Tibial artery (tissue), 4 donors: ENCODE measurements at regions of chr15 and their contacts with region 1.

Region 1: GRCh38 chr15:97129674-97130073 is 799.2 kb downstream of the NR2F2 start:
- DNase-seq: no peak
- H3K4me3 ChIP-seq: no peak overlapping the region
- H3K27ac ChIP-seq: no peak overlapping the region
- H3K4me1 ChIP-seq: no peaks in the 10 kb centered on the region
- H3K27me3 ChIP-seq: no peaks in the 10 kb centered on the region
- CTCF ChIP-seq: no peak

Region 2: DNA sequence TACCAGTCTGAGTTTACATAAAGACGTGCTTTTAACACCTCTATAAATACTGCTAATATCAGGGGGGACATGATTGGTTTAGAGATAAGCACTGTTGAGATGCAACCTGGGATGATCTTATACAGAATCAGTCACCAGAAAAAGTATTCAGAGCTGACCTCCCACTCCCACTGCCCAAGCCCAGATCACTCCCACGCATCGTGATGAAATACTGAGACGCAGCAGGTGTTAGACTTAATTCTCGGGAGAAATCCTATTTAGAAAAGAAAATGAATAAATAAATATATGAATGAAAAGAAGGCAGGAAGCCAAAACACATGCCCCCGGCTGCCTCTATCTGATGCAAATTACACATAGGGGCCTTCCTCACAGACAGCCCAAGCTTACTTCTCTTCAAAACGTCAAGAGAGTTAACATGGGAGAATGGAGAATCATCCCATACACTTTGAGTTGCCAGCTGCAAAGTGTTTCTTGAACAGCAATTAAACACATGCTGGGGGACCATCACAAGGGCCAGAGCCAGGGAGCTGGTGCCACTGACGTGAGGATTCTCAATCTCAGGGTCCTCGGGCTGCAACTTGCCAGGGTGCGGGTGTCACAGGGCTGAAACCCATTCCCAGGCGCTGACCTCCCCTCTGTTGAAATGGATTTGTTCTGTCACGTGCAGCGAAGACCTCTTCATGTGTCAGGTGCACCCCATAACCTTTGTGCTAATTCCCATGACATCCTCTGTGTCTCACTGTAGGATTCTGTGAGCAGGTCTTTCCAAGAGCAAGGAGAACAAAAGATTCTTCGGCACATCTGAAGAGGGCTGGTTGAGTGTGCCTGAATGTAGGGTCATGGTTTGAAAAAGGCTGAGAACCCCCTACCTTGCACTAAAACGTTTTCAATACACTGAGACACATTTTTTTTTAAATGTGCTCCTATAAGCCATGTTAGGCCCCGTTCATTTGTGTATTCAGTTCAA is 66.7 kb after region 1 on chr15:
- intact Hi-C with region 1: loop called (anchors 10 kb)
- DNase-seq: no peak
- H3K4me3 ChIP-seq: no peak overlapping the region
- H3K27ac ChIP-seq: no peak overlapping the region
- H3K4me1 ChIP-seq: no peaks in the 10 kb centered on the region
- H3K27me3 ChIP-seq: no peaks in the 10 kb centered on the region
- CTCF ChIP-seq: no peak

Region 3: DNA sequence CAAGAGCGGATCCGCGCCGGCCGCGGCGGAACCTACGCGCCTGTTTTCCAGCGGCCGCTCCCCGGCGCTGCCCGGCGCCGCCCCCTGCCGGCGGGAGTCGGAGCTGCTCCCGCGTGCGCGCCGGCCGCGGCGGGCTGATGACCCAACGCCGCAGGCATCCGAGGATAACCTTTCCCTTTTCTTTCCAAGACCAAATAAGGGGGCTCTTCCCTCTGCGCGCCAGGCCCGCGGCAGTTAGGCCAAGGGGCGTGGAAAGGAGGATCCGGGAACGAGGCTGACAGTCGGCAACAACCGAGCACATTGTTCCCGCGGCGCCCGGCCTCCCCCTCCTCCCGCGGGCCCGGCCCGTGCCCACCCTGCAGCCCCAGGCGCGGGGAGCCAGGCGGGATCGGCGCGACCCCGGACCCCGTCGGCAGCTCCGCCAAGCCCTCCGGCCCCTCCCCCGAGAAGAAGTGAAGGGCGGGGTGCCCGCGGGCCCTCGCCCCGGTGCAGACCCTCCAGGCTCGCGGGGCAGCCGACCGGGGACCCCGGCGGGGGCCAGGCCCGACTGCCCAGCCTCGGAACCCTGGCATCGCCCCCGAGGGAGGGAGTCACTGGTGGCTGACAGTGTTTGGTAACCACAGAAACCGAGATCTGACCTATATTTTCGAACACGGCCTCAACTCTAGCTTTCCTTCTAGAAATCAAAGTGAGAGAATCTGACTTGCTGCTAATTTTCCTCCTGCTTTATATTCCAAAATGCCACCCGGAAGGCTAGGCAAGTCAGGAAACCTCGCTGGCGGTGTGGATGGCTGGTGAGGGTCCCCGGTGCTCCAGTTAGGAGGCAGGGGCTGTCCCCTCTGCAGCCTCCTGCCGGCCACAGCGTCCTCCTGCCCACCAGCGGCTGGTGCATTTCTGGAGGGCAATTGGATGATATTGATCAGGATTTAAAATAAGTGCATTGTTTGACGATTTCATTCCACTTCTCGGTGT is 1929.6 kb after region 1 on chr15:
- intact Hi-C with region 1: no loop called
- DNase-seq: peak; percentile 73 to 94
- H3K4me3 ChIP-seq: peak overlapping the region; percentile 61 to 75
- H3K27ac ChIP-seq: peak overlapping the region; percentile 92 to 93
- H3K4me1 ChIP-seq: peaks cover 0 to 19% (median 7%) of the 10 kb centered on the region in 4 donors
- H3K27me3 ChIP-seq: no peaks in the 10 kb centered on the region
- CTCF ChIP-seq: peak; percentile 73 to 90